ENCODE measurements at regions of chr4 and their contacts with region 1.

Region 1: DNA sequence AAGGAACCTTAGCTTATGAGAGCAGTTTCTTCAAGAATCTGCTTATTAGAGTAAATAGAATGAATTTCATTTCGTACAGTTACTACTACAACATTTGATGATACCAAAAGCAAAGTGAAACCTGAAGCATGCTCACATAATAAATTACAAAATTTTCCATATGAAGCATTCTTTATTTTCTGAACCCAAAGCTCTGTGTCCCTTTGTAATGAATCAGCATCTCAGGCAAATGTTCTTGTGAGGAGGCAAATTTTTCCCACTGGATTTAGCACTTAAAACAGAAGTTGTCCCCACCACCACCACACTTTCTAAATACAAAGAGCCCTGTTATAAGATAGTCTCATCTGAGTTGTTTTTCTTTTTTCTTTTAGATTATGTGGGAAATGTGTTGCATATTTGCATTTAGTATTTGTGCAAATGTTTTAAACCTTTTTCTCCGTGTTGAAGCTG is 70.7 kb upstream of the NFKB1 start:
- DNase-seq: no peak
- ATAC-seq: no peak

Region 2: GRCh38 chr4:102321260-102321995 is 109.1 kb before region 1 on chr4:
- intact Hi-C with region 1: no loop called
- DNase-seq: no peak
- ATAC-seq: no peak

Region 3: GRCh38 chr4:102344954-102345794 is 85.3 kb before region 1 on chr4 and contains the start of gene SLC39A8:
- intact Hi-C with region 1: loop called (anchors 5 kb)
- DNase-seq: peak; percentile 93
- ATAC-seq: peak; percentile 96
- total RNA-seq, gene SLC39A8: 3.1 TPM

Region 4: GRCh38 chr4:102500696-102501446 is 70.4 kb after region 1 on chr4 and contains the start of gene NFKB1:
- intact Hi-C with region 1: loop called (anchors 5 kb)
- DNase-seq: peak; percentile 90
- ATAC-seq: peak; percentile 65
- total RNA-seq, gene NFKB1: 20.6 TPM

Region 5: GRCh38 chr4:103019308-103020124 is 589.0 kb after region 1 on chr4 and contains the start of gene SLC9B1:
- intact Hi-C with region 1: loop called (anchors 5 kb)
- DNase-seq: peak; percentile 98
- ATAC-seq: peak; percentile 99
- total RNA-seq, gene SLC9B1: 0.95 TPM

Region 6: GRCh38 chr4:103099691-103100392 is 669.4 kb after region 1 on chr4 and contains the start of gene BDH2:
- intact Hi-C with region 1: loop called (anchors 5 kb)
- DNase-seq: no peak
- ATAC-seq: peak; percentile 95
- total RNA-seq, gene BDH2: 25.4 TPM

Measured in Right ventricle myocardium inferior (tissue), 1 donor.